CD4-positive, alpha-beta T cell (primary cell): ENCODE measurements at regions of chr15 and their contacts with region 1.

Region 1: GRCh38 chr15:44738340-44738984 is 2.1 kb downstream of the TRIM69 start:
- DNase-seq: peak in 3 of 14 experiments; percentile 74 to 77 (median 74)
- ATAC-seq: peak; percentile 25
- H3K4me3 ChIP-seq: no peak overlapping the region
- H3K4me3 Mint-ChIP-seq: no peak overlapping the region
- H3K27ac ChIP-seq: no peak overlapping the region
- H3K27ac Mint-ChIP-seq: peak overlapping the region; percentile 62
- H3K4me1 ChIP-seq: peaks cover 37% of the 10 kb centered on the region
- H3K4me1 Mint-ChIP-seq: peaks cover 53% of the 10 kb centered on the region
- H3K27me3 ChIP-seq: no peaks in the 10 kb centered on the region
- H3K27me3 Mint-ChIP-seq: no peaks in the 10 kb centered on the region
- CTCF ChIP-seq: peak; percentile 91

Region 2: GRCh38 chr15:44573386-44573785 is 165.1 kb before region 1 on chr15:
- CTCF ChIA-PET with region 1: interaction called, 11 read pairs
- POLR2A ChIA-PET with region 1: no interaction called
- intact Hi-C with region 1: loop called in 1 of 2 experiments (anchors 5 kb)
- DNase-seq: no peak
- ATAC-seq: no peak
- H3K4me3 ChIP-seq: no peak overlapping the region
- H3K4me3 Mint-ChIP-seq: no peak overlapping the region
- H3K27ac ChIP-seq: no peak overlapping the region
- H3K27ac Mint-ChIP-seq: peak overlapping the region; percentile 76
- H3K4me1 ChIP-seq: peaks cover 3% of the 10 kb centered on the region
- H3K4me1 Mint-ChIP-seq: peaks cover 12% of the 10 kb centered on the region
- H3K27me3 ChIP-seq: no peaks in the 10 kb centered on the region
- H3K27me3 Mint-ChIP-seq: no peaks in the 10 kb centered on the region
- CTCF ChIP-seq: no peak

Region 3: GRCh38 chr15:44584162-44584749 is 154.2 kb before region 1 on chr15:
- CTCF ChIA-PET with region 1: interaction called, 11 read pairs
- POLR2A ChIA-PET with region 1: interaction called, 6 read pairs
- intact Hi-C with region 1: loop called in 1 of 2 experiments (anchors 5 kb)
- DNase-seq: peak; percentile 32 to 78 (median 54)
- ATAC-seq: peak; percentile 94
- H3K4me3 ChIP-seq: no peak overlapping the region
- H3K4me3 Mint-ChIP-seq: no peak overlapping the region
- H3K27ac ChIP-seq: no peak overlapping the region
- H3K27ac Mint-ChIP-seq: no peak overlapping the region
- H3K4me1 ChIP-seq: peaks cover 1% of the 10 kb centered on the region
- H3K4me1 Mint-ChIP-seq: peaks cover 21% of the 10 kb centered on the region
- H3K27me3 ChIP-seq: no peaks in the 10 kb centered on the region
- H3K27me3 Mint-ChIP-seq: no peaks in the 10 kb centered on the region
- CTCF ChIP-seq: peak; percentile 64

Region 4: DNA sequence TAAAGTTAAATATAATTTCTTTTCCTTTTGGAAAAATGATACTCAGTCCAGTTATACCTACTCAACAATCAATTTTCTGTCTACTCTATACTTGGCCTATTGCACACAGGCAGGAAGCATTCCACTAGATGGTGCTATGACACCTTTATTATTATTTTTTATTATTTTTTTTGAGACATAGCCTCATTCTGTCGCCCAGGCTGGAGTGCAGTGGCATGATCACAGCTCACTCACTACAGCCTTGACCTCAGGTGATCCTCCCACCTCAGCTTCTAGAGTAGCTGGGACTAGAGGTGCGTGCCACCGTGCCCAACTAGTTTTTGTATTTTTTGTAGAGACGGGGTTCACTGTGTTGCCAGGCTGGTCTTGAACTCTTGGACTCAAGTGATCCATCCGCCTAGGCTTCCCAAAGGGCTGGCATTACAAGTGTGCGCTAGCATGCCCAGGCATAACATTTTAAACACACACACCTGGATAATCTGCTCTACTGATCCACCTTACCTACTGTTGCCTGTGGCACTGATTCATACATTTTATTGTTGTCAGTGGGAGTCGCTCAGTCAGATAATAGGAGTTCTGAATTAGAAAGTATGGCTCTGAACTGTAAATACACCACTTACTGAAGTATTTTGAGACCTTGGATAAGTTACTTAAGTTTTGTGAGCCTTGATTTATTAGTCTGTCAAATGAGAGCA is 145.3 kb before region 1 on chr15:
- CTCF ChIA-PET with region 1: interaction called, 5 read pairs
- POLR2A ChIA-PET with region 1: interaction called, 3 read pairs
- intact Hi-C with region 1: loop called (anchors 1 to 2 kb)
- DNase-seq: peak in 7 of 14 experiments; percentile 6 to 71 (median 23)
- ATAC-seq: peak; percentile 85
- H3K4me3 ChIP-seq: no peak overlapping the region
- H3K4me3 Mint-ChIP-seq: no peak overlapping the region
- H3K27ac ChIP-seq: no peak overlapping the region
- H3K27ac Mint-ChIP-seq: peak overlapping the region; percentile 76
- H3K4me1 ChIP-seq: peaks cover 16% of the 10 kb centered on the region
- H3K4me1 Mint-ChIP-seq: peaks cover 14% of the 10 kb centered on the region
- H3K27me3 ChIP-seq: no peaks in the 10 kb centered on the region
- H3K27me3 Mint-ChIP-seq: no peaks in the 10 kb centered on the region
- CTCF ChIP-seq: peak; percentile 72

Region 5: GRCh38 chr15:44719293-44719999 is 19.0 kb before region 1 on chr15:
- CTCF ChIA-PET with region 1: interaction called, 71 read pairs
- POLR2A ChIA-PET with region 1: interaction called, 2,107 read pairs
- intact Hi-C with region 1: no loop called
- DNase-seq: peak in 11 of 14 experiments; percentile 31 to 85 (median 50)
- ATAC-seq: peak; percentile 68
- H3K4me3 ChIP-seq: no peak overlapping the region
- H3K4me3 Mint-ChIP-seq: peak overlapping the region; percentile 81
- H3K27ac ChIP-seq: peak overlapping the region; percentile 72 to 74
- H3K27ac Mint-ChIP-seq: peak overlapping the region; percentile 100
- H3K4me1 ChIP-seq: peaks cover 83% of the 10 kb centered on the region
- H3K4me1 Mint-ChIP-seq: peaks cover 88% of the 10 kb centered on the region
- H3K27me3 ChIP-seq: no peaks in the 10 kb centered on the region
- H3K27me3 Mint-ChIP-seq: no peaks in the 10 kb centered on the region
- CTCF ChIP-seq: no peak